BJ (cell line): ENCODE measurements at regions of chr13 and their contacts with region 1.

Region 1: DNA sequence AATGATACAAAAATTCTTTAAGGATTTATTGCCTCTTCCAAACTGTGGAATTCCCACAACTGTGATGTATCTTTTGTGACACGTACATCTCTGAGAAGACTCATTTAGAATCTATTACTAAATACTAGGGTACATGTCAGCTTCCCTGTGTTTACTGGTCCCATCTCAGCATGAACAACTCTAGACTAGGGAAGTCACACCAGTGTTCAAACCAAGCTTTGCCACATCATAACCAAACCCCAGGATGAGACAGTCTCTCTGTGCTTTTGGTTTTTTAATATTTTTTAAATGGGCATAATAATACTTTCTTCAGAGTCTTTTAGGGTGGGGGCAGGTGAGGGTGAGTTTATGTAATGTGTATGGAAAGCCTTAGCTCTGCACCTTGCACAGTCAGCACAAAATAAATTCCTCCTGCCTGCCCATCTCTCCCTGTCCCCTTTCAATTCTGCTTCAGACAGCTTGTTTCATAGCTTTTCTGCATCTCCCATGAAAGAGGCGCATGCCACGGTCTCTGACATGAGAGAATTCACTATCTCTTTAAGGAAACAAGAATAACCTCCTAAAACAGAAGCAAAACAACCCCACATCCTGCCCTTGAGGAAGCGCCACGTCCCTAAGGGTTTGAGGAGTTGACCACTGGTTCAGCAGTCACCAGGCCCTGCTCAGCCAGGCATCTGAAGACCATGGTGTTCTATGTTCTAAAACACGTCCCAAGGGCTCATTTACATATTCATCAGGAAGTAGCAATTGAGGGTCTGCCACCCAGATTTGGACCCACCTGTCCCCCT is 174.5 kb downstream of the USP12 start:
- DNase-seq: no peak
- H3K4me3 ChIP-seq: no peak overlapping the region
- H3K27me3 ChIP-seq: peaks cover 14% of the 10 kb centered on the region
- CTCF ChIP-seq: no peak

Region 2: GRCh38 chr13:27038323-27038722 is 41.2 kb after region 1 on chr13:
- CTCF ChIA-PET with region 1: no interaction called
- POLR2A ChIA-PET with region 1: no interaction called
- DNase-seq: no peak
- H3K4me3 ChIP-seq: no peak overlapping the region
- H3K27me3 ChIP-seq: no peaks in the 10 kb centered on the region
- CTCF ChIP-seq: no peak

Region 3: DNA sequence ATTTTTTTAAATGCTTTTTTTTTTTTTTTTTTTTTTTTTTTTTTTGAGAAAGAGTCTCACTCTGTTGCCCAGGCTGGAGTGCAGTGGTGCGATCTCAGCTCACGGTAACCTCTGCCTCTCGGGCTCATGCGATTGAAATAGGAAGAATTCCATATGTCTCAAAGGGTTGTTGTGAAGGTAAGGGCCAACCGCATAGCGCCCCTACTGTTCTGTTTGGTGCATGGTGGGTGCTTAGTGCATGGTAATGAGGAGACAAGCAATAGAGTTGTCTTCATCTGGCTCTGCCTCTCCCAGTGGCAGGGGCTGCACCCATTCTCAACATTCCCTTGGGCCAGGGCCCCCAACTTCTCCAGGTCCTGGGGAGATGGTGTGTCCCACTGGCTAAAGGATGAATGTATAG is 342.1 kb after region 1 on chr13:
- CTCF ChIA-PET with region 1: no interaction called
- POLR2A ChIA-PET with region 1: interaction called, 20 read pairs
- DNase-seq: no peak
- H3K4me3 ChIP-seq: no peak overlapping the region
- H3K27me3 ChIP-seq: peaks cover 14% of the 10 kb centered on the region
- CTCF ChIP-seq: peak; percentile 71

Region 4: GRCh38 chr13:27347211-27347772 is 350.1 kb after region 1 on chr13:
- CTCF ChIA-PET with region 1: no interaction called
- POLR2A ChIA-PET with region 1: interaction called, 11 read pairs
- DNase-seq: no peak
- H3K4me3 ChIP-seq: no peak overlapping the region
- H3K27me3 ChIP-seq: peaks cover 11% of the 10 kb centered on the region
- CTCF ChIP-seq: no peak